Activated CD4-positive, alpha-beta memory T cell treated with anti-CD3 and anti-CD28 coated beads for 36 hours (primary cell): ENCODE measurements at regions of chr20 and their contacts with region 1.

Region 1: DNA sequence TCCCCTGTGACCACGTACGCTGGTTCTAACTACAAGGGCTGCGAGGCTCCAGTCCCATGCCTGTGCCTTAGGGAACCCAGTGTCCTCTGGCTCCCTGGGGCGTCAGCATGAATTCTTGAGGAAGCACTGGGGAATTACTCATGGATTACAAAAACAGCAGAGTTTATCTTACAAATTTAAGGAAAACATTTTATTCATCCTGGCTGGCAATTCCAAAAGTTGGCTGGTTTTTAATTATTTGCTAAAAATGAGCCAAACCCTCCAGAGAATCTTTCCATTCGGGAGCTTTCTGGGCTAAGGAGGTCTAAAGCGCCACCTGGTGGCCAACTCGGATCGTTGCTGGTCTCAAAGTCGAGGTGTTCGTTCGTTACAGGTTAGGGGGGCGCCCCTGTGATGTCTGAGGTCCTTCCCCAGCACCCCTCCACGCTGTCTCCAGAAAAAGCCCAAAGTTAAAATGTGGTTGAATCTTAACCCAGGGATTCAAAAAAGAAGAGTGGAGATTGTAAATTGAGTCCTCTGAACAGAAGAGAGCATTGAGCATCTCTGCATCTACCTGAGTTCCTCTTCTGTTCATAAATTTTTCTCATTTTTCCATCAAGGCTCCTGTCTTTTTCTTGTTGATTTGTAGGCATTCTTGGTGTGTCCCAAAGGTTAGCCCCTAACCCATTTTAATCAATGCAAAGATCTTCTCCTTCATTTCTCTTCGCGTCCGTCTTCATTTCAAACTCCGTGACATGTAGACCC is 99.4 kb downstream of the BFSP1 start:
- DNase-seq: peak; percentile 57
- H3K4me3 Mint-ChIP-seq: no peak overlapping the region
- H3K27ac Mint-ChIP-seq: no peak overlapping the region
- H3K4me1 Mint-ChIP-seq: no peaks in the 10 kb centered on the region
- H3K27me3 Mint-ChIP-seq: peaks cover 17% of the 10 kb centered on the region

Region 2: GRCh38 chr20:17077030-17077429 is 354.8 kb before region 1 on chr20:
- CTCF ChIA-PET with region 1: no interaction called
- POLR2A ChIA-PET with region 1: no interaction called
- intact Hi-C with region 1: no loop called
- DNase-seq: no peak
- H3K4me3 Mint-ChIP-seq: no peak overlapping the region
- H3K27ac Mint-ChIP-seq: no peak overlapping the region
- H3K4me1 Mint-ChIP-seq: no peaks in the 10 kb centered on the region
- H3K27me3 Mint-ChIP-seq: no peaks in the 10 kb centered on the region

Region 3: GRCh38 chr20:17421493-17421892 is 10.3 kb before region 1 on chr20:
- CTCF ChIA-PET with region 1: interaction called, 31 read pairs
- POLR2A ChIA-PET with region 1: no interaction called
- intact Hi-C with region 1: no loop called
- DNase-seq: no peak
- H3K4me3 Mint-ChIP-seq: no peak overlapping the region
- H3K27ac Mint-ChIP-seq: no peak overlapping the region
- H3K4me1 Mint-ChIP-seq: no peaks in the 10 kb centered on the region
- H3K27me3 Mint-ChIP-seq: peaks cover 7% of the 10 kb centered on the region